ENCODE measurements at regions of chr15 and their contacts with region 1.

Region 1: GRCh38 chr15:57640935-57641682 is 49.4 kb downstream of the MYZAP start:
- DNase-seq: peak; percentile 40 to 63
- ATAC-seq: peak; percentile 87 to 92
- H3K4me3 ChIP-seq: no peak overlapping the region
- H3K27ac ChIP-seq: no peak overlapping the region
- H3K4me1 ChIP-seq: no peaks in the 10 kb centered on the region
- CTCF ChIP-seq: peak; percentile 38; the same call in 2 of the 3 replicates
- EP300 ChIP-seq: no peak
- POLR2A ChIP-seq: no peak
- RAD21 ChIP-seq: peak; percentile 43 to 50; a peak in 3 of 5 replicates

Region 2: DNA sequence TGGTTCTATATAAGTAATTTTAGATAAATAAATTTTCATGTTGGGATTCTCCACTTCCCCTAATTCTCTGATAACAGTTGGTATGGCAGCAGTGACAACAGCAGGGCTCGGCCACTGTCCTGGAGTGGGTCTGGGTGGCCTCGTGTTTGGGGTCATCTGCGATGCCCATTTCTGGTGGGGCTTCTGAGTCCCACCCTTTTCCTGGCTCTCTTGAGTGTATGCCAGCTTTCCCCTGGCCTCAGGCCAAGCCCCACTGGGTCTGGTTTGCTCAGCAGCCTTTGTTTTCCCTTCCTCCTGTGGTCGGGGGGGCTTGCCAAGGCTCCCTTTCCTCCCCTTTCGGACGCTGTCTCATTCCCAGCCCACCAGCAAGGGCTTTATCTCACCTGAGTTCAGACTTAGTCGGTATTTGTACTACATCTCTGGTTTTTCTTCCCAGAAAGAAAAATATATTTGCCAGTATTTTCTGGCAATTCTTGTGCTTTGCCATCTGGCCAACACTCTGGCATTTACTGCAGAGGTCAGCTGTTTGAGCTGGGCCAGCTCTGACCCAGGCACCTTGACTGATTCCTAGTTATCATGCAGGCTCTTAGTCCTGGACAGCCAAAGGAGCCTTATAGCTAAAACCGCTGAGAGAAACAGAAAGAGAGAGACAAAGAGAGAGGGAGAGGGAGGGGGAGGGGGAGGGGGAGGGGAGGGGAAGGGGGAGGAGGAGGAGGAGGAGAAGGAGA is 14.2 kb before region 1 on chr15:
- CTCF ChIA-PET with region 1: interaction called, 11 read pairs
- POLR2A ChIA-PET with region 1: no interaction called
- DNase-seq: no peak
- ATAC-seq: no peak
- H3K4me3 ChIP-seq: no peak overlapping the region
- H3K27ac ChIP-seq: no peak overlapping the region
- H3K4me1 ChIP-seq: no peaks in the 10 kb centered on the region
- CTCF ChIP-seq: no peak
- EP300 ChIP-seq: no peak
- POLR2A ChIP-seq: no peak
- RAD21 ChIP-seq: no peak

Region 3: DNA sequence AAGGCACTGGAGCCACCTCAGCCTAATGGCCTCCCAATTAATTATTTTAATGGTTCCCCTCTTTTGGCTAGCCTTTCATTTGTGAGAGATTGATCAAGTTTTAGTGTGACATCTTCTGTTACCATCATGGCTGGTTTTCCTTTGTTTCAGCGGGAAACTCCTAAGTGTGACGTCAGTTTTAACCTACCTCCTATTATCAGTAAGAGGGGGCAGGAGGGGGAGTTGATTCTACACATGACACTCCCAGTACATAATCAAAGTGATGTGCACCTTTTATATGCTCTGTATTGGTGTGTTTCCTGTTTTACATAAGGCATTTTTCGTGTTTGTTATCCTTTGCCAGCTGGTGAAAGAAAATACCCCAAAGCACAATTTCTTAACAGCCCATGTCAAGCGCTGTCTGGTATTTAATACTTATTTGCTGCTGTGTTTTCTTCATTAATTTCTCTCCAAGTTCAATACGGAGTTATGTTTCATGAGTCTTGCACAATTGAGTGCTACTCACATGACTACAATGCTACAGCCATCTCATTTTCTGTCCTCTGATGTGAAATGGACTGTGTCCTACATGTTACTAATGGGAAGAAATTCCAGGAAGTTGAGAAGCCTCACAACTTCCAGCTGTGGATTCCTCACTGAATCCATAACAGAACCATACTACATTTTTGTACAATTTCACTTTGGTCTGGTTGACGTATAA is 13.2 kb after region 1 on chr15:
- CTCF ChIA-PET with region 1: interaction called, 18 read pairs
- POLR2A ChIA-PET with region 1: no interaction called
- DNase-seq: no peak
- ATAC-seq: no peak
- H3K4me3 ChIP-seq: no peak overlapping the region
- H3K27ac ChIP-seq: no peak overlapping the region
- H3K4me1 ChIP-seq: no peaks in the 10 kb centered on the region
- CTCF ChIP-seq: no peak
- EP300 ChIP-seq: no peak
- POLR2A ChIP-seq: no peak
- RAD21 ChIP-seq: no peak

Region 4: DNA sequence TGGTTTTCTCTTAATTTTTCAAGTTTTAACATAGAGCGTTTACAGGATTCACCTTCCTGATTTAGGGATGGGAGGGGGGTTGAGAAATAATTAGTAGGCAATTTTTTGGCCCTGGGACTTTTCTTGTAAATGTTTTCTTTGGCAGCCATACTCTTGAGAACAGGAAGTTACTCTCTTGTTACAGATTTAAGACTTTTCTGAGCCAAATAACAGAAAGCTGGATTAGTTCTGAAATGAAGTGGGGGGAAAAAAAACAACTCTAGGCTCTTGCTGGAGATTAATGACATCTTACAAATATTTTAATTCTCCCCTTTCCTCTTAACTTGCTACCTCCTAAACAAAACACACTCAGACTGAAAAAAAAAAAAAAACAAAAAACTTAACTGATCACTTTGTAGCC is 51.6 kb after region 1 on chr15:
- CTCF ChIA-PET with region 1: no interaction called
- POLR2A ChIA-PET with region 1: no interaction called
- DNase-seq: no peak
- ATAC-seq: no peak
- H3K4me3 ChIP-seq: no peak overlapping the region
- H3K27ac ChIP-seq: no peak overlapping the region
- H3K4me1 ChIP-seq: no peaks in the 10 kb centered on the region
- CTCF ChIP-seq: no peak
- EP300 ChIP-seq: no peak
- POLR2A ChIP-seq: no peak
- RAD21 ChIP-seq: no peak

Region 5: DNA sequence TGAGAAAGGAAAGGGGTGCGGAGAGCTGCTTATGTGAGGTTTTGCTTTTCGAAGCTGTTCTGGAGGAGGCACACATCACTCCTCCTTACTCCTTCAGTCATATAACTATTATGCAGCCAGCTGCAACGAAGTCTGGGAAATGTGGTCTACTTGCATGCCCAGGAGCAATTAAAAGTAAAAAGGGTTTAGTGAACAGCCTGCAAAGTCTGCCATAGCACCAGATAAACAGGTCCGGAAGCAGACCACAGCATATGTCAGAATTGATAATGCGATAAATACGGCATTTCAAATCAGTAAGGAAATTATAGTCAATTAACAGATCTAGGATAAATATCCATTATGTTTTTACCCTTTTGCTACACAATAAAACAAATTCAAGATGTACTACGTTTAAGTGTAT is 164.9 kb after region 1 on chr15:
- CTCF ChIA-PET with region 1: no interaction called
- POLR2A ChIA-PET with region 1: no interaction called
- DNase-seq: no peak
- ATAC-seq: no peak
- H3K4me3 ChIP-seq: no peak overlapping the region
- H3K27ac ChIP-seq: no peak overlapping the region
- H3K4me1 ChIP-seq: no peaks in the 10 kb centered on the region
- CTCF ChIP-seq: no peak
- EP300 ChIP-seq: no peak
- POLR2A ChIP-seq: no peak
- RAD21 ChIP-seq: no peak

Measured in A549 (cell line).